Mammary epithelial cell (primary cell): ENCODE measurements at regions of chr1 and their contacts with region 1.

Region 1: GRCh38 chr1:54001591-54001990 is 16.4 kb downstream of the LDLRAD1 start:
- DNase-seq: no peak
- H3K4me3 ChIP-seq: no peak overlapping the region
- H3K27ac ChIP-seq: no peak overlapping the region
- H3K4me1 ChIP-seq: no peaks in the 10 kb centered on the region
- H3K27me3 ChIP-seq: no peaks in the 10 kb centered on the region
- CTCF ChIP-seq: no peak

Region 2: DNA sequence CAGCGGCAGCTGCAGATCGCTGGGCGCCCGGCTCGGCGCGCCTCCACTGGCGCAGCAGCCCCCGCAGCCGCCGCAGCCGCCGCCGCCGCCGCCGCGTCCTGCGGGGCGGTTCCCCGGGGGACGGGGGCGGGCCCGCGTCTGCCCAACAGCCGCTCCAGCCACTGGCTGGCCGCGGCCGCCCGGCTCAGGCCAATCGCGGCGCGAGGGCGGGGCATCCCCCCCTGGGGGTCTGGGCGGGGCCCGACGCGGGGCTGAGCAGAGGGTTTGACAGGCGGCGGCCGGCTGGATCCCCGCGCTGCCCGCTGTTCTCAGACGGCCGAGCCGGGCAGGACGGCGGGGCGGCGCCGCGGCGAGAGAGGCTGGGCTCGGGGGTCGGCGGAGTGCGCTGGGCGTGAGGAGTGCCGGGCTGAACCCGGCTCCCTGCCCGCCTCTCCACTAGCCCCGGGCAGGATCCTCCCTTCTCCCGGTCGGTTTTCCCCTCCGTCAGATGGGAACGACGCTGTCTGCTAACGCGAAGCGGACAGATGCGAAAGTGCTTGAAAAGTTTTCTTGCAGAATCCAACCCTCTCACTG is 262.4 kb before region 1 on chr1 and contains the start of gene GLIS1:
- CTCF ChIA-PET with region 1: no interaction called
- dilution Hi-C with region 1: loop called (anchors 10 kb)
- in situ Hi-C with region 1: no loop called
- intact Hi-C with region 1: no loop called
- DNase-seq: peak; percentile 70
- H3K4me3 ChIP-seq: peak within 1 kb of the TSS; percentile 42 to 55 (median 52)
- H3K27ac ChIP-seq: no peak within 1 kb of the TSS
- H3K4me1 ChIP-seq: peaks cover 5% of the 10 kb centered on the region
- H3K27me3 ChIP-seq: peaks cover 30% of the 10 kb centered on the region
- CTCF ChIP-seq: no peak
- total RNA-seq, gene GLIS1: not detected

Region 3: GRCh38 chr1:53987880-53988279 is 13.7 kb before region 1 on chr1:
- CTCF ChIA-PET with region 1: no interaction called
- dilution Hi-C with region 1: no loop called
- in situ Hi-C with region 1: no loop called
- intact Hi-C with region 1: no loop called
- DNase-seq: no peak
- H3K4me3 ChIP-seq: no peak overlapping the region
- H3K27ac ChIP-seq: no peak overlapping the region
- H3K4me1 ChIP-seq: no peaks in the 10 kb centered on the region
- H3K27me3 ChIP-seq: peaks cover 3% of the 10 kb centered on the region
- CTCF ChIP-seq: no peak